Gastrocnemius medialis (tissue), 4 donors: ENCODE measurements at regions of chr7 and their contacts with region 1.

Region 1: DNA sequence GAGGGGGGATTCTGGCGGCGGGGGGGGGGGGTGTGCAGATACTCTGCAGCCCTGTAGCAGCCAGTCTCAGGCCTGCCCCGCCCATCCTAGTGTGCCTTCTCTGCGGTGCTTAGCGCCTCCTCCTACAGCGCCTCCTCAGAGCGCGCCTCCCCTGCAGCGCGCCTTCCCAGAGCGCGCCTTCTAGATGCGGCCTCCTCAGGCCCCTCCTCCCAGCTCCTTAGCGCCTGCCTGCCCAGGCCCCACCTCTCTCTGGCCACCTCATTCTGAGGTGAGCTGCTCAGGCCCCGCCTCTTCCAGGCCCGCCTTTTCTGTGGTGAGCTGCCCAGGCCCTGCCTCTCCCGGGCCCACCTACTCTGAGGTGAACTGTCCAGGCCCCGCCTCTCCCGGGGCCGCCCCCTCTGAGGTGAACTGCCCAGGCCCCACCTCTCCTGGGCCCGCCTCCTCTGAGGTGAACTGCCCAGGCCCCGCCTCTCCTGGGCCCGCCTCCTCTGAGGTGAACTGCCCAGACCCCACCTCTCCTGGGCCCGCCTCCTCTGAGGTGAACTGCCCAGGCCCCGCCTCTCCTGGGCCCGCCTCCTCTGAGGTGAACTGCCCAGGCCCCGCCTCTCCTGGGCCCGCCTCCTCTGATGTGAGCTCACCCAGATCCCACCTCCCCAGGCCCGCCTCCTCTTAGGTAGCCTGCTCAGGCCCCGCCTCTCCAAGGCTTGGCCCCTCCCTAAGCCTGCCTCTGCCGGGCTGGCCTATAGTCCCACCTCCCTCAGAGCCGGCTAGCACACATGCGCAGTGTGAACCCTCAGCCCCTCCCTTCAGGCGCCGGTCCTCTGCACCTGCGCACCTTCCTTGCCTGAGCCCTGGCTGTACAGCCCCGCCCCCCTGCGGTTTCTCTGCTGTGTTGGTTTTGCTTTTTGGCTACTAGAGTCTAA is 2.1 kb upstream of the SGCE start:
- DNase-seq: peak; percentile 82 to 94
- ATAC-seq: peak; percentile 88 to 90
- H3K4me3 ChIP-seq: peak overlapping the region; percentile 49 to 61 (median 52)
- H3K27ac ChIP-seq: peak overlapping the region; percentile 40 to 53 (median 49)
- H3K4me1 ChIP-seq: peaks cover 15 to 17% of the 10 kb centered on the region in 2 donors
- H3K27me3 ChIP-seq: peaks cover 21 to 29% (median 28%) of the 10 kb centered on the region in 3 donors
- CTCF ChIP-seq: no peak
- POLR2A ChIP-seq: peak in 1 of 2 donors; percentile 18

Region 2: GRCh38 chr7:94436018-94436604 is 221.9 kb before region 1 on chr7:
- in situ Hi-C with region 1: no loop called
- intact Hi-C with region 1: loop called (anchors 10 kb)
- DNase-seq: peak; percentile 26 to 43
- ATAC-seq: peak; percentile 47 to 80
- H3K4me3 ChIP-seq: no peak overlapping the region
- H3K27ac ChIP-seq: no peak overlapping the region
- H3K4me1 ChIP-seq: no peaks in the 10 kb centered on the region
- H3K27me3 ChIP-seq: no peaks in the 10 kb centered on the region
- CTCF ChIP-seq: peak; percentile 36 to 73 (median 62)
- POLR2A ChIP-seq: no peak

Region 3: DNA sequence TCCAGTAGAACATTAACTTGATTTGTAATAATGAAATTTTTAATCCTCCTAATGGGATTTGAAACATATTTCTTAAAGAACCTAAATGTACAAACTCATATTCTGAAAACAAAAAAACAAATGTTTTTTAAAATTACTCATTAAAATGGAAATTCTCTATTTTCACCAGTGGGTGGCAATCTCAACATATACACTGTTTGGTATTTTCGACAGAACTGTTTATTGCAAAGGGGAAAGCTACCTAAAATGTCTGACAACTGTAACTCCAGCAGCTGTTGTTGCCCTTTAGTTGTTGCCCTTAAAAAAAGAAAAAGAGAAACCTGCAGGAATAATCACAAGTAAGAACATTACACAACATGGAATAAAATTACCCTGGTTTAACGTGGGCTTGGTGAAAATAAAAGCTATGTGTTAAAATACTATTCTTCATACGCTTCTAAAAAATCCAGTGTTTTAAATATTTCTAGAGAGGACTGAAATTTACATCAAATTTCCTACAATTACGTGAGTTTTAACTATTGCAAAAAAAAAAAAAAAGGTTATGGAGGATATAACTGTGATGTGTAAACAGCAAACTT is 208.8 kb before region 1 on chr7:
- in situ Hi-C with region 1: no loop called
- intact Hi-C with region 1: loop called (anchors 5 kb)
- DNase-seq: no peak
- ATAC-seq: peak in 1 of 2 donors; percentile 58
- H3K4me3 ChIP-seq: no peak overlapping the region
- H3K27ac ChIP-seq: no peak overlapping the region
- H3K4me1 ChIP-seq: peaks cover 5 to 9% of the 10 kb centered on the region in 2 donors
- H3K27me3 ChIP-seq: no peaks in the 10 kb centered on the region
- CTCF ChIP-seq: peak in 4 of 5 experiments; percentile 37 to 60 (median 56)
- POLR2A ChIP-seq: no peak

Region 4: DNA sequence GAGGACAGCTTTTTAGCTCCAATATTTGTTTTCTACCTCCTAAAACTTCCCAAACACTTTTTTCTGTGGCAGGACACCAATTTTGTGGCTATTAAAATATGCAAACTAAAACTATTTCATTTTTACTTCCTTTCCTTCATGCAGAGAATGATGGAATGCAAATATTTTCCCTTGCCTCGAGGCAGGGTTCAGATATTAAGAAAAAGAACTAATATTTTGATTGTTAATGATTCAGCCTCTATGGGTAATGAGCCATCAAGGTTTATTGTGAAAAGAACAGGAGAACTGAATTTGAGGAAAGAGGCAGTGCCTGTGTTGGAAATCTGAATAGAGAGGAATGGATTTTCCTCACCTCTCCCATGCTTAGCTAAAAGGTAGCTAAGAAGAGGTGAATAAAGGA is 191.5 kb before region 1 on chr7:
- in situ Hi-C with region 1: no loop called
- intact Hi-C with region 1: no loop called
- DNase-seq: no peak
- ATAC-seq: no peak
- H3K4me3 ChIP-seq: no peak overlapping the region
- H3K27ac ChIP-seq: no peak overlapping the region
- H3K4me1 ChIP-seq: no peaks in the 10 kb centered on the region
- H3K27me3 ChIP-seq: no peaks in the 10 kb centered on the region
- CTCF ChIP-seq: no peak
- POLR2A ChIP-seq: no peak

Region 5: DNA sequence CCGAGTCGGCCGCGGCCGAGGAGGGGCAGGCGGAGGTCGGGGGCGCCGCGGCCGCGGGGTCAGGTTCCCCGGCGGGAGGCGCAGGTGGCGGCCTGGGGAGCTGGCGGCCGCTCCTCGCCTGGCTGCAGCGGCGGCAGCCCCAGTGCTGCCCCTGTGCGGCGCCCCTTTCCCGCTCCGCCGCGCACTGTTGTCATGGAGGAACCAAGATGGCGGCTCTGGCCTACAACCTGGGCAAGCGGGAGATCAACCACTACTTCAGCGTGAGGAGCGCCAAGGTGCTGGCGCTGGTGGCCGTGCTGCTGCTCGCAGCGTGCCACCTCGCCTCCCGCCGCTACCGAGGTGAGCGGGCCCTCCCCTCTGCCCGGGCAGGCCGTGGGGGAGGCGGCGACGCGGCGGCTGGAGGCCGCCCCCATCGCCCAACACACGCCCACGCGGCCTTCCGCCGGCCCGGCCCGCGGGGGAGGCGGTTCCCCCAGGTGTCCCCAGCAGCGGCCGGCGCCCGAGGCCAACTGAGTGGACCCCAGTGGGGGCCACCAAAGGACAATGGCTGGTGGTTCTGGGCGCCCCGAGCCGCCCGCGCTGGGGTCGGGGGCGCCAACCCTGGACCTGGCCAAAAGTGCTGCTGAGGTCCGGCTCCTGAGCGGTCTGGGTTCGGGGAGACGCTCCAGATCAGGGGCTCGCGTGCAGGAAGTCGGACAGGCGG is 148.0 kb before region 1 on chr7:
- in situ Hi-C with region 1: no loop called
- intact Hi-C with region 1: loop called (anchors 2 kb)
- DNase-seq: peak; percentile 43 to 59
- ATAC-seq: peak; percentile 85 to 90
- H3K4me3 ChIP-seq: peak overlapping the region; percentile 80 to 94 (median 88)
- H3K27ac ChIP-seq: peak overlapping the region; percentile 88 to 95 (median 94)
- H3K4me1 ChIP-seq: peaks cover 28 to 36% of the 10 kb centered on the region in 2 donors
- H3K27me3 ChIP-seq: no peaks in the 10 kb centered on the region
- CTCF ChIP-seq: peak in 3 of 5 experiments; percentile 9 to 53 (median 33)
- POLR2A ChIP-seq: peak in 1 of 2 donors; percentile 18

Region 6: GRCh38 chr7:94697035-94697974 is 39.3 kb after region 1 on chr7:
- in situ Hi-C with region 1: no loop called
- intact Hi-C with region 1: loop called (anchors 5 kb)
- DNase-seq: peak; percentile 10 to 39
- ATAC-seq: peak; percentile 76 to 79
- H3K4me3 ChIP-seq: no peak overlapping the region
- H3K27ac ChIP-seq: no peak overlapping the region
- H3K4me1 ChIP-seq: no peaks in the 10 kb centered on the region
- H3K27me3 ChIP-seq: no peaks in the 10 kb centered on the region
- CTCF ChIP-seq: no peak
- POLR2A ChIP-seq: no peak